ENCODE measurements at regions of chr19 and their contacts with region 1.

Region 1: GRCh38 chr19:4246767-4247593 is at the start of gene YJU2:
- DNase-seq: peak; percentile 100
- H3K4me3 Mint-ChIP-seq: peak within 1 kb of the TSS; percentile 87
- H3K27ac Mint-ChIP-seq: peak within 1 kb of the TSS; percentile 96
- H3K4me1 Mint-ChIP-seq: peaks cover 14% of the 10 kb centered on the region
- H3K27me3 Mint-ChIP-seq: no peaks in the 10 kb centered on the region
- total RNA-seq, gene YJU2: 35.5 and 38.2 TPM in 2 replicates

Region 2: DNA sequence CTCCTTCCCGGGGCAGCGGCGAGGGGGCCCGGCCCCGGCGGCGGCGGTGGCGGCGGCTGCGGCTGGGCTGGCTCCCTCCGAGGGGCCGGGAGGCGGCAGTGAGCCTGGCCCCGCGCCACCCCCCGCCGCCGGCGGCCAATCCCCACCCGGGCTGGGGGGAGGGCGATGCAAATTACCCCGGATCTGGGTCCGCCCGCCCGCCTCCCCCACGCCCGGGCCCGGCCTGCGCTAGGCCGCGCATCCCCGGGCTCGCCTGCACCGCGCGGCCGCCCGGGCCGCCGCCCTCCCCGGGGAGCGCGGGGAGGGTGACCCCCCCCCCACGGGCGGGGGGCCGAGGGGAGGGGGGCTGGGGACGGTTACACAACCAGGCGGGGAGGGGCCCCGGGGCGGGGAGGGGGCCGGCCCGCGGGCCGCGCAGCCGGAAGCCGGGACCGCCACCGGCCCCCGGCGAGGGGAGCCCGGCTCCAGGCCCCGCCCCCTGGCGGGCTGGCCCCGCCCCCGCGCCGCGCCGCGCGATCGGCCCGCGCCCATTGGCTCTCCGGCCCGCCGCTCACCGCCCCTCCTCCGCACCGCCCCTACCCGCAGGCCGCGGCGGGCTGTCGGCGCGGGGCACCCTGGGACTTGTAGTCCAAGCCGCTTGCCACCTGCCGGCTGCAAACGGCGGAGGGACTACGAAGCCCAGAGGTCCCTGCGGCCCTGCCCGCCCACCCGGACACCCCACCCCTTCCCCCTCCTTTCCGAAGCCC is 181.4 kb before region 1 on chr19:
- intact Hi-C with region 1: loop called (anchors 5 kb)
- DNase-seq: peak; percentile 99
- H3K4me3 Mint-ChIP-seq: peak overlapping the region; percentile 69
- H3K27ac Mint-ChIP-seq: no peak overlapping the region
- H3K4me1 Mint-ChIP-seq: peaks cover 25% of the 10 kb centered on the region
- H3K27me3 Mint-ChIP-seq: no peaks in the 10 kb centered on the region

Region 3: GRCh38 chr19:4236713-4237112 is 10.3 kb before region 1 on chr19:
- intact Hi-C with region 1: no loop called
- DNase-seq: no peak
- H3K4me3 Mint-ChIP-seq: no peak overlapping the region
- H3K27ac Mint-ChIP-seq: no peak overlapping the region
- H3K4me1 Mint-ChIP-seq: peaks cover 5% of the 10 kb centered on the region
- H3K27me3 Mint-ChIP-seq: no peaks in the 10 kb centered on the region

Region 4: DNA sequence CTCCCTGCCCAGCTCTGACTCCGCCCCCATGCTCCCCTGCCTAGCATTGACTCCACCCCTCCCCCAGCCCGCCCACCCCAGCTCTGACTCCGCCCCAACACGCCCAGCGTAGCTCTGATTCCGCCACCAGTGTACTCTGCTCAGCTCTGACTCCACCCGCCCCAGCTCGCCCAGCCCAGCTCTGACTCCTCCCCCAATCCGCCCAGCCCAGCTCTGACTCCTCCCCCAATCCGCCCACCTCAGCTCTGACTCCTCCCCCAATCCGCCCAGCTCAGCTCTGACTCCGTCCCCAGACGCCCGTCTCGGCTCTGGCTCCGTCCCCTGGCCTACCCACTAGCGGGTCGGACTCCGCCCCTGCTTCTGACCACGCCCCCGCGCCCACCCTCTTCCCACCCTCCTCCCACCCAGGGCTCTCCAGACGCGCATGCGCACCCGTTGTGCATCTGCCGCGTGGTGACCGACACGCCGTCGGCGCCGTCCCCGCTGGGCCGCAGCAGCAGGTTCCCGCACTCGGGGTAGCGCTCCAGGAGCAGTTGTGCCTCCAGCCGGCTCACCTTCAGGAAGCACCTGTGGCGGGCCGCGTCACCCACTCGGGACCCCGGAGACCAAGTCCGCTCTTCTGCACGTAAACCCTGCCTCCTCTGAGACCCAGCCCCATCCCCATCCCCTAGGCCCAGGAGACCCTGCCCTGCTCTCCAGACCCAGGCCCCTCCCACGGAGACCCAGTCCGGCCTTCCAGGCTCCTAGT is 81.4 kb after region 1 on chr19:
- intact Hi-C with region 1: loop called (anchors 1 kb)
- DNase-seq: peak; percentile 96
- H3K4me3 Mint-ChIP-seq: peak overlapping the region; percentile 90
- H3K27ac Mint-ChIP-seq: peak overlapping the region; percentile 93
- H3K4me1 Mint-ChIP-seq: peaks cover 26% of the 10 kb centered on the region
- H3K27me3 Mint-ChIP-seq: peaks cover 6% of the 10 kb centered on the region

Region 5: DNA sequence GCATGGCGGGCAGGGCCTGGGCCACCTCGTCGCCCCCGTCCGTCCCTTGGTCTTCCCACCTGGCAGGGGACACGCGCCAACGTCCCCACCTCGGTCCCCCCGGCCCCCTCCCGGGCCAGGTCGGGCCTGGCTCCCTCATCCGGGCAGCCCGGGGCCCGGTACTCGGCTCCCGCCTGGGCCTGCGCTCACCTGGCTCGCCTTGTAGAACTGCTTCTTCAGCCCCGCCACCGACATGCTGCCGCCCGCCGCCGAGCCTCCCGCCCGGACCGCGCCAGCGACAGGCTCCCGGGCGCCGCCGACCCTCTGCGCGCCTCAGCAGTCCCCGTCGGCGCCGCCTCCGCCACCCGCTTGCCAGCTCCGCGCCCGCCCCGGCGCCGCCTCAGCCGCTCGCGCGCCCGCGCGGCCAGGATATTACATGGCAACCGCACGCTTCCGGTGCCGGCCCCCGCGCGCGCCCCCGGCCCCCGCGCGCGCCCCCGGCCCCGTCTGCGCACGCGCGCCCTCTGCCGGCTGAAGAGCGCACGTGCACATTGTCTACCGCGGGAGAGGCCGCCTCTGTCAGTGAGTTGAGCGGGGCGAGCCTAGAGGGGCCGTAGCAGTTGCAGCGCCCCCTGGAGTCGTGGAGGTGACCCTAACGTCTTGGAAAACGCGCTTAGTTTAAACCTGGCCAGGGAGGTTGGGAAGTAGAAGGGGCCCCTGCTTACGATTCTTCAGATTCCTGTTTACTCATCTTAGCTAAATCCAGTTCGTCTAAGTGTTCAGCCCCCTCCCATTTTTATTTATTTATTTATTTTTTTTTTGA is 153.4 kb after region 1 on chr19 and contains the start of gene SH3GL1:
- intact Hi-C with region 1: loop called (anchors 1 kb)
- DNase-seq: peak; percentile 97
- H3K4me3 Mint-ChIP-seq: peak within 1 kb of the TSS; percentile 98
- H3K27ac Mint-ChIP-seq: peak within 1 kb of the TSS; percentile 96
- H3K4me1 Mint-ChIP-seq: peaks cover 53% of the 10 kb centered on the region
- H3K27me3 Mint-ChIP-seq: no peaks in the 10 kb centered on the region
- total RNA-seq, gene SH3GL1: 53.8 and 56.8 TPM in 2 replicates